AG04450 (cell line): ENCODE measurements at regions of chr1 and their contacts with region 1.

Region 1: GRCh38 chr1:193031438-193031837 is 27.7 kb downstream of the UCHL5 start:
- DNase-seq: no peak
- H3K4me3 ChIP-seq: no peak overlapping the region
- H3K27ac ChIP-seq: no peak overlapping the region
- H3K27me3 ChIP-seq: no peaks in the 10 kb centered on the region
- CTCF ChIP-seq: peak; percentile 40

Region 2: GRCh38 chr1:193019442-193020026 is 11.9 kb before region 1 on chr1:
- CTCF ChIA-PET with region 1: interaction called, 10 read pairs
- POLR2A ChIA-PET with region 1: no interaction called
- DNase-seq: peak; percentile 27
- H3K4me3 ChIP-seq: no peak overlapping the region
- H3K27ac ChIP-seq: no peak overlapping the region
- H3K27me3 ChIP-seq: no peaks in the 10 kb centered on the region
- CTCF ChIP-seq: peak; percentile 54